ENCODE measurements at regions of chr4 and their contacts with region 1.

Region 1: DNA sequence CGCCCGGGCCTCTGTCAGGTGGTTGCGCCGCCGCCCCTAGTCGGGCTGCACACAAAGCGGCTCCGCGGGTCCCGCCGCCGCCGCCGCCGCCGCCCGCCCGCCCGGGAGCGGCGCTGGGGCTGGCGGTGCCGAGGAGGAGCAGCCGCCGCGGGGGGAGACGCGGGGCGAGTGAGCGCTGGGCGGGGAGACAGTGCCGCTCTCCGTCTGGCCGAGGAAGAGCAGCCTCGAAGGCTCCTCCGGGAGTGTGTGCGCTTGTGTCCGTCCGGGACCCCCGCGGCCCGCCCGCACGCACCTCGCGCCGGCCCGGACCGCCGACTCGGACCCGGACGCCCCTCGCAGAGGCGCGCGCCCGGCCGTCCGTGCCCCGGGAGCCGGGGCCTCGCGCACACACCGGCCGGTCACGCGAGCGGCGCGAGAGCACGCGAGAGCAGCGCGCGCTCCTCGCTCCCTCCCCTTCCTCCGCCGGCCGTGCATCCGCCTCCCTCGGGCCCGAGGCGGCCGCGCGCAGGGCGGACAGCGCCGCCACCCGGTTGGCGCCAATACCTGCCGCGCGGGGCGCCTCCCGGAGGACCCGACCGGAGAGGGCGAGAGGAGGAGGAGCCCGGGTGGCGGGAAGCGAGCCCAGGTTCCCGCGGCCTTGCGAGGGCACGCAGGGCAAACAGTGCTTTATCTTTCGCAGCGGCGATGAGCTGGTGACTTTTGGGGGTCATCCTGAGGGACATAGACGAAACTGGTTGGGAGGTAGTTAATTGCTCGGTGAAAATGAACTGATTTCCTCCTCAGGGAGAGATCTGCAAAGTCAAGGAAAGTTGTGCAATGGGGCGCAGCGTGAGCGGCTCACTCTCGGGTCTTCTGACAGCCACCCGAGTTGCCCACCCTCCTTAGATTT is at the start of gene PDS5A:
- DNase-seq: peak; percentile 98
- H3K4me3 ChIP-seq: peak within 1 kb of the TSS; percentile 82 to 99
- H3K27ac ChIP-seq: peak within 1 kb of the TSS; percentile 87 to 89
- H3K4me1 ChIP-seq: peaks cover 6 to 10% of the 10 kb centered on the region in 2 experiments; a peak in 2 of 4 replicates
- H3K27me3 ChIP-seq: no peaks in the 10 kb centered on the region
- CTCF ChIP-seq: peak; percentile 70
- EP300 ChIP-seq: no peak
- RAD21 ChIP-seq: peak; percentile 58
- polyA plus RNA-seq, gene PDS5A: 14.1 and 18.1 TPM in 2 replicates

Region 2: DNA sequence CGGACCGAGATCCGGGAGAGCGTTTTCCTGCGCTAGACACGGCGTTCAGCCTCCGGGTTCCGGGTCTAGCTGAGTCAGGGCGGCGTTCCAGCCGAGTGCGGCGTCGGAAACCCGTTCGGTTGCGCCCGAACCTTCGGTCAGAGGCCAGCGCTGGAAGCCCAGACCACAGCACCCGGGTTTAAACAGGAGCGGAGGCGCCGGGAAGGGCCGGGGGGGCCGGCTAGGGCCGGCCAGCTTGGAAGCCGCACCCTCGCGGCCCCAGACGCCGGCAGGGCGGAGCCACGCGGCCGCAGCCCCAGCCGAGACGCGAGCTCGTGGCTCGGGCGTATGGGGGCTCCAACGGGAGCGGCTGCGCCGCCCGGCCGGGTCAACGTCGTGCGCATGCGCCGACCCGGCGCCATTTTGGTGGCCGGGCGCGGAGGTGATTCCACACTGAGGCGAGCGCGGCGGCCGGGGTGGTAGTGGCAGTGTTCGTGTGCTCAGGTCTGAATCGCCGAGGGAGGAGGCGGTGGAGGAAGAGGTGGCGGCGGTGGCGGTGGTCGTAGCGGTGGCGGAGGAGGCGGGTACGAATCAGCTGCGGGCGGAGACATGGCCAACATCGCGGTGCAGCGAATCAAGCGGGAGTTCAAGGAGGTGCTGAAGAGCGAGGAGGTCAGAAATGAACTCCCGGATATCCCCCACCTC is 279.9 kb before region 1 on chr4 and contains the start of gene UBE2K:
- CTCF ChIA-PET with region 1: interaction called, 15 read pairs
- POLR2A ChIA-PET with region 1: interaction called, 3 read pairs
- DNase-seq: peak; percentile 97
- H3K4me3 ChIP-seq: peak within 1 kb of the TSS; percentile 81 to 97
- H3K27ac ChIP-seq: peak within 1 kb of the TSS; percentile 90 to 95
- H3K4me1 ChIP-seq: peaks cover 0 to 5% of the 10 kb centered on the region in 2 experiments; a peak in 2 of 4 replicates
- H3K27me3 ChIP-seq: no peaks in the 10 kb centered on the region
- CTCF ChIP-seq: no peak
- EP300 ChIP-seq: no peak
- RAD21 ChIP-seq: no peak
- polyA plus RNA-seq, gene UBE2K: 54.4 and 102 TPM in 2 replicates

Region 3: GRCh38 chr4:39963656-39964055 is 14.1 kb before region 1 on chr4:
- CTCF ChIA-PET with region 1: interaction called, 15 read pairs
- POLR2A ChIA-PET with region 1: no interaction called
- DNase-seq: no peak
- H3K4me3 ChIP-seq: no peak overlapping the region
- H3K27ac ChIP-seq: no peak overlapping the region
- H3K4me1 ChIP-seq: no peaks in the 10 kb centered on the region
- H3K27me3 ChIP-seq: no peaks in the 10 kb centered on the region
- CTCF ChIP-seq: no peak
- EP300 ChIP-seq: no peak
- RAD21 ChIP-seq: no peak

Region 4: DNA sequence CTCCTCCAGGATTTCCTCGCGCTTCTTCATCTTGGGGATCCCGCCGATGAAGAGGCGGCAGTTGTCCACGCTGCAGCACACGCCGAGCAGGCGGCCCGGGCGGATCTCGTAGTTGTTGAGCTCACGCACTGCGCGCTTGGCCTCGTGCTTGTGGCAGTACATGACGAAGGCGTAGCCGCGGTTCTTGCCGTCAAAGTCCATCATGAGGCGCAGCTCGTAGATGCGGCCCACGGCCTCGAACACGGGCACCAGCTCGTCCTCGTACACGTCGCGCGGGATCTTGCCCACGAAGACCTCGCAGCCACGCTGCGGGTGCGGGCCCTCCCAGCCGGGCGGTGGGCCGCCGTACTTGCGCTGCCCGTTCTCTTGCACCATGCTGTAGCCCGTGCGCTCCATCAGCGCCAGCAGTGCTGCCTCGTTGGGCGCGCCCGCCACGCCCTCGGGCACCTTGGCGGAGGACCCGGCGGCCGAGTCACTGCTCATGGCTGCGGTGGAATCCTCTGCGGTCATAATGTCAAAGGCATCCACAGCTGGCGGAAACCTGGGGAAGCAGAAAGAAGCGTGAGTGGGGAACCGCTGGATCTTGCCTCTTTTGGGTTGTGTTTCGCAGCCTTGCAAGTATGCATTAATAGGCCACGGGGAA is 460.8 kb after region 1 on chr4:
- CTCF ChIA-PET with region 1: no interaction called
- POLR2A ChIA-PET with region 1: no interaction called
- DNase-seq: no peak
- H3K4me3 ChIP-seq: no peak overlapping the region
- H3K27ac ChIP-seq: no peak overlapping the region
- H3K4me1 ChIP-seq: no peaks in the 10 kb centered on the region
- H3K27me3 ChIP-seq: no peaks in the 10 kb centered on the region
- CTCF ChIP-seq: no peak
- EP300 ChIP-seq: no peak
- RAD21 ChIP-seq: no peak

Measured in SK-N-SH (cell line).